OCI-LY7 (cell line): ENCODE measurements at regions of chr17 and their contacts with region 1.

Region 1: DNA sequence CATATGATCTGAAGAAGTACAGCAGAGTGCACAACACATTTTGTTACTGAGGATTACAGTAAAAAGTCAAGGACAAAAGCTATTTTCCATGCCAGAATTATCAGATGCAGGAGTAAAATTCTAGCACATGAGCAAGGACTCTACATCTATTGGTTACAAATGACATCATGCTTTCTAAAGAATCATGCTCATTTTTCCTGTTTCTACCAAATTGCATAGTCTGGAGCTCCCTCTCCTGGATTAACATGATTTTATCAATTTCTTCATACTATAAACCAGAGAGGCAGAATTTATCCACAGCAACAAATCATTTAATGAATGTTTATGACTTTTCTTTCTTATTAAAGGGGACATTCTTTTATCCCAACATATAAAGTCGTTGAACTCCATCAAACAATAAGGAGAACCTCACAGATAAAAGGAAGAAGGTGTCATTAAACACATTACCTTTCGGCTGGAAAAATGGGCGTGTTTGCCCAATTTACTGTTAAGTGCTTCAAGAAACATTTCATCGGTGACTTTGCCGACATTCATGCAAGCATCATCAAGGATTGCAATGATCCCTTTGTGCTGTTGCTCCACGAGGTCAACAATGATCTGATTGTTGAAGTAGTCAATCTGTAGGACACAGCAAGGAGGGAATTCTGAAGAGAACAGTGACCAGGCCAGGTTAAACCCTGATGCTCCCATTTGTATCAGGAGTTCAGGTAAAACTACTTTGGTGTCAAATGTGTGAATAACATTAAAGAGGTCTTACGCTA is 121.7 kb downstream of the MYO1D start:
- DNase-seq: peak; percentile 55
- H3K4me3 ChIP-seq: no peak overlapping the region
- H3K27ac ChIP-seq: no peak overlapping the region
- H3K4me1 ChIP-seq: no peaks in the 10 kb centered on the region
- CTCF ChIP-seq: peak; percentile 75

Region 2: GRCh38 chr17:32277281-32277680 is 477.9 kb before region 1 on chr17:
- CTCF ChIA-PET with region 1: no interaction called
- POLR2A ChIA-PET with region 1: no interaction called
- intact Hi-C with region 1: no loop called
- DNase-seq: no peak
- H3K4me3 ChIP-seq: no peak overlapping the region
- H3K27ac ChIP-seq: no peak overlapping the region
- H3K4me1 ChIP-seq: peaks cover 8% of the 10 kb centered on the region
- CTCF ChIP-seq: no peak

Region 3: GRCh38 chr17:32551186-32551955 is 203.9 kb before region 1 on chr17:
- CTCF ChIA-PET with region 1: no interaction called
- POLR2A ChIA-PET with region 1: no interaction called
- intact Hi-C with region 1: no loop called
- DNase-seq: no peak
- H3K4me3 ChIP-seq: no peak overlapping the region
- H3K27ac ChIP-seq: no peak overlapping the region
- H3K4me1 ChIP-seq: peaks cover 11% of the 10 kb centered on the region
- CTCF ChIP-seq: no peak

Region 4: DNA sequence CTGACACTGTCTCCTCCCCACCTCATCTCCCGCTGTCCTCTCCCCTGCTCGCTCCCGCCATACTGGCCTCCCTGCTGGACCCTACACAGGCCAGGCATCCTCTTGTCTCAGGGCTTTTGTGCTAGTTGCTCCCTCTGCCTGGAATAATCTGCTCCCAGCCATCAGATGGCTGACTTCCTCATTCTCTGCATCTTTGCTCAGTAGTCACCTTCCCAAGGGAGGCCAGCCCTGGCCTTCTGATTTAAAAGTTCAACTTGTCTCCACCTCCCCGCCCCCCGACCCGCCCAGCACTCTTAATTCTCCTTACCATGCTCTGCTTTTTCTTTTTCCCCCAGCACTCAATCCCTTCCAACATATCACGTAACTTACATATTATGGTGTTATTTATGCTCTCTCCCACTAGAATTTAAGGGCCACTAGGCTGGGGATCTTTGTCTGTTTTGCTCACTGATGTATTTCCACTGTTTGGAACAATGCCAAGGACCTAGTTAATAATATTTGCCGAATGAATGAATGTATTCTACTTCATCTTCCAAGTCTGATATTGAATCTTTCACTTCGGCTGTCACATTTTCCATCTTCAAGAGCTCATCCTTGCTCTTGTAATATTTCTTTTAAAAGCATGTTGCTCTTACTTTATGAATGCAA is 90.2 kb before region 1 on chr17:
- CTCF ChIA-PET with region 1: no interaction called
- POLR2A ChIA-PET with region 1: no interaction called
- intact Hi-C with region 1: loop called (anchors 10 kb)
- DNase-seq: no peak
- H3K4me3 ChIP-seq: no peak overlapping the region
- H3K27ac ChIP-seq: no peak overlapping the region
- H3K4me1 ChIP-seq: no peaks in the 10 kb centered on the region
- CTCF ChIP-seq: no peak

Region 5: GRCh38 chr17:32684087-32684958 is 70.9 kb before region 1 on chr17:
- CTCF ChIA-PET with region 1: no interaction called
- POLR2A ChIA-PET with region 1: no interaction called
- intact Hi-C with region 1: no loop called
- DNase-seq: no peak
- H3K4me3 ChIP-seq: no peak overlapping the region
- H3K27ac ChIP-seq: no peak overlapping the region
- H3K4me1 ChIP-seq: no peaks in the 10 kb centered on the region
- CTCF ChIP-seq: no peak